CD4-positive, alpha-beta T cell (primary cell): ENCODE measurements at regions of chr22 and their contacts with region 1.

Region 1: DNA sequence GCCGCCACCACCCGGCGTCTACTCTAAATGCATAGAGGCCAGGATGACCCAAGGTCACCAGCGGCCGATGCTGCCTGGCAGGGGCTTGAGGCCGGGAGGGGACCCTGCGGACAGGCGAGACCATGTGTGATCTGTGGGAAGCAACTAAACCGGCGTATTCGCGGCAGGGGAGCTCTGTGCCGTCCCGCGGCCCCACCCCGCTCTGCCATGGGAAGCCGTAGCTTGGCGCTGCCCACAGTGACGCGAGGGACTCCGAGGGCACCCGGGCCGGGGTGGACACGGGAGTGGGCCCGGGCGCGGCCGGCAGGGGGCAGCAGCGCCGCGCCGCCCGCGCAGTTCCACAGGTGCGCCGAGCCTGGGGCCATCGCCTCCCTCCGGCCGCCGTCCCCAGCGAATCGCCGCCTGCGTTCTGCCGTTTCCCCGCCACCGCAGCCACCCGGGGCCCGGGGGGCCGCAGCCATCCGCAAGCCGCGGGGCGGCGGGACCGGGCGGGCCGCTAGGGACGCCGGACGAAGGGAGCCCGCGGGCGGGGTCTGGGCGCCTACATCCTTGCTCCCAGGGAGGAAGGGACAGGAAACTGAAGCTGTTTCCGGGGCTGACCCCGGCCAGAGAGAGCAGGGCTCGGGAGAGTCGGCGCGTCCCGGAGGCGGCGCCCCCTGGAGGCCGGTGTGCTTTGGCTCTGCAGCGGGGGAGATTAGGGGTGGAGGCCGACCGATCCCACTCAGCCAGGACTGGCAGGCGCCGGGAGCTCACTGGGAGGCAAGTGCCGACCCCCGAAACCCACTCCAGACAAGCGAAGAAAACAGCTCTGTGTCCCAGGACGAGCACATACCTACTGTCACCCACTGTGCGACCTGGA is 12.5 kb upstream of the HDHD5 start:
- DNase-seq: peak; percentile 50 to 89 (median 68)
- ATAC-seq: peak; percentile 89
- H3K4me3 ChIP-seq: peak overlapping the region; percentile 73
- H3K4me3 Mint-ChIP-seq: peak overlapping the region; percentile 92
- H3K27ac ChIP-seq: peak overlapping the region in 1 of 2 donors; percentile 36
- H3K27ac Mint-ChIP-seq: peak overlapping the region; percentile 80
- H3K4me1 ChIP-seq: peaks cover 13% of the 10 kb centered on the region
- H3K4me1 Mint-ChIP-seq: peaks cover 6% of the 10 kb centered on the region
- H3K27me3 ChIP-seq: no peaks in the 10 kb centered on the region
- H3K27me3 Mint-ChIP-seq: no peaks in the 10 kb centered on the region
- CTCF ChIP-seq: peak; percentile 69

Region 2: GRCh38 chr22:17084554-17085276 is 86.8 kb before region 1 on chr22 and contains the start of gene IL17RA:
- CTCF ChIA-PET with region 1: interaction called, 15 read pairs
- POLR2A ChIA-PET with region 1: interaction called, 8 read pairs
- intact Hi-C with region 1: loop called in 1 of 2 experiments (anchors 2 kb)
- DNase-seq: peak; percentile 87 to 98 (median 95)
- ATAC-seq: peak; percentile 86
- H3K4me3 ChIP-seq: peak within 1 kb of the TSS; percentile 82
- H3K4me3 Mint-ChIP-seq: peak within 1 kb of the TSS; percentile 97
- H3K27ac ChIP-seq: peak within 1 kb of the TSS; percentile 68 to 93
- H3K27ac Mint-ChIP-seq: peak within 1 kb of the TSS; percentile 88
- H3K4me1 ChIP-seq: peaks cover 49% of the 10 kb centered on the region
- H3K4me1 Mint-ChIP-seq: peaks cover 48% of the 10 kb centered on the region
- H3K27me3 ChIP-seq: no peaks in the 10 kb centered on the region
- H3K27me3 Mint-ChIP-seq: no peaks in the 10 kb centered on the region
- CTCF ChIP-seq: no peak
- total RNA-seq, gene IL17RA: 23.2 to 24.3 TPM

Region 3: GRCh38 chr22:17158568-17159503 is 12.7 kb before region 1 on chr22 and contains the start of gene HDHD5:
- CTCF ChIA-PET with region 1: interaction called, 46 read pairs
- POLR2A ChIA-PET with region 1: interaction called, 7 read pairs
- intact Hi-C with region 1: no loop called
- DNase-seq: peak; percentile 82 to 96 (median 88)
- ATAC-seq: peak; percentile 92
- H3K4me3 ChIP-seq: peak within 1 kb of the TSS; percentile 85
- H3K4me3 Mint-ChIP-seq: peak within 1 kb of the TSS; percentile 82
- H3K27ac ChIP-seq: peak within 1 kb of the TSS; percentile 41 to 65
- H3K27ac Mint-ChIP-seq: peak within 1 kb of the TSS; percentile 58
- H3K4me1 ChIP-seq: peaks cover 39% of the 10 kb centered on the region
- H3K4me1 Mint-ChIP-seq: peaks cover 37% of the 10 kb centered on the region
- H3K27me3 ChIP-seq: no peaks in the 10 kb centered on the region
- H3K27me3 Mint-ChIP-seq: no peaks in the 10 kb centered on the region
- CTCF ChIP-seq: no peak
- total RNA-seq, gene HDHD5: 11.0 to 11.6 TPM

Region 4: GRCh38 chr22:17205432-17205831 is 33.9 kb after region 1 on chr22:
- CTCF ChIA-PET with region 1: no interaction called
- POLR2A ChIA-PET with region 1: no interaction called
- intact Hi-C with region 1: no loop called
- DNase-seq: peak in 1 of 14 experiments; percentile 12
- ATAC-seq: no peak
- H3K4me3 ChIP-seq: no peak overlapping the region
- H3K4me3 Mint-ChIP-seq: no peak overlapping the region
- H3K27ac ChIP-seq: peak overlapping the region in 1 of 2 donors; percentile 2
- H3K27ac Mint-ChIP-seq: peak overlapping the region; percentile 44
- H3K4me1 ChIP-seq: no peaks in the 10 kb centered on the region
- H3K4me1 Mint-ChIP-seq: peaks cover 26% of the 10 kb centered on the region
- H3K27me3 ChIP-seq: no peaks in the 10 kb centered on the region
- H3K27me3 Mint-ChIP-seq: no peaks in the 10 kb centered on the region
- CTCF ChIP-seq: no peak

Region 5: DNA sequence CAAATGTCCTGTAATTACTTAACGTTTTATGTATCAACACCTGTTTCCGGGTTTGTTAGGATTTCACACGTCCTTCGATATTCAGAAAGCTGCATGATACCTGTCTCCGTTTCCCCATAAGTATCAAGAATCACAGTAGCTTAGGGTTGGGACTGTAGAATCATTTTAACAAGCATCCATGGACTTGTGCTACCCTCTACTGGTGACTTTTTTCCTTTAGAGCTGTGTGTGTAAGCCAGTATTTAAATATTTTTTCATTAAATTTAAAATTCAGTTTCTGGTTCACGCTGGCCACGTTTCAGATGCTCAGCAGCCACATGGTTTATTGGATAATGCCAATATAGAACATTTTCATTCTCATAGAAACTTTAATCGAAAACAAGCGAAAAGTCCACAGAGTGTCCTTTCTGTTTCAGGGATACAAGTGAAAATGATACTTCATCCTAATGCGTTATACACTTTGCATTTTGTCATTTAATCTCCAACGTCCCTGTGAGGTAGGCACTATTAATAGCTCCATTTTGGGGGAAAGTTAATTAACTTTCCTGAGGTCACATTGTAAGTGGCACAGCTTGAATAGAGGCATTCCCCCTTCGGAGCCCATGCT is 330.2 kb after region 1 on chr22:
- CTCF ChIA-PET with region 1: interaction called, 19 read pairs
- POLR2A ChIA-PET with region 1: interaction called, 22 read pairs
- intact Hi-C with region 1: loop called (anchors 1 kb)
- DNase-seq: peak in 9 of 14 experiments; percentile 2 to 79 (median 10)
- ATAC-seq: peak; percentile 76
- H3K4me3 ChIP-seq: no peak overlapping the region
- H3K4me3 Mint-ChIP-seq: no peak overlapping the region
- H3K27ac ChIP-seq: no peak overlapping the region
- H3K27ac Mint-ChIP-seq: no peak overlapping the region
- H3K4me1 ChIP-seq: no peaks in the 10 kb centered on the region
- H3K4me1 Mint-ChIP-seq: no peaks in the 10 kb centered on the region
- H3K27me3 ChIP-seq: peaks cover 0 to 2% of the 10 kb centered on the region in 2 experiments
- H3K27me3 Mint-ChIP-seq: peaks cover 4% of the 10 kb centered on the region
- CTCF ChIP-seq: peak; percentile 82